IMR-90 (cell line): ENCODE measurements at regions of chr17 and their contacts with region 1.

Region 1: DNA sequence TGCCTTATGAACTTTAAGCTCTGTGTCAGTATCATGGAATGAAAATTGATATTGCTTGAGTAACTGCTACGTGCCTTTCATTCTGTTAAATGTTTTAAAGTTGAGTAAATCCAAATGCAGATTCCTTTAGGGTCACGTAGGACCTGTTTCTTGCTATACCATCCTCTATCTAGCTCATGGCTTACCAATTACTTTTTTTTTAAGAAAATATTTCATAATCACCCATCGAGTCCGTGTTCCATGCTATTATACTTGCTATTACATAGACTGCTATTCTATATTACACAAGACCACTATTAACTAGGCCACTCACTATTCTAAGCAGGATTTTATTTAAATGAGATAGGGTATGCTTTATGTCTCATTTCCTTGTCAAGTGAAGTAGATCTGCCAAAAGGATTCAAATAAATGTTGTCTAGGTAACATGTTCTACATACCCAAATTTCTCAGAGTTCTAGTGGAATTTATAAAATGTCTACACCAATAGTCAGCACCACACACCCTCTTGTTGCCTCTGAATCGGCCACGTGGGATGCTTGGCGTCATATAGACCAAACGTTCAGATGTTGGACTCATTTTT is 11.9 kb downstream of the ANKFN1 start:
- DNase-seq: peak; percentile 81
- ATAC-seq: peak; percentile 72
- H3K4me3 ChIP-seq: no peak overlapping the region
- H3K27ac ChIP-seq: peak overlapping the region; percentile 97
- H3K4me1 ChIP-seq: peaks cover 10% of the 10 kb centered on the region
- H3K27me3 ChIP-seq: no peaks in the 10 kb centered on the region
- CTCF ChIP-seq: no peak
- POLR2A ChIP-seq: no peak
- RAD21 ChIP-seq: no peak

Region 2: DNA sequence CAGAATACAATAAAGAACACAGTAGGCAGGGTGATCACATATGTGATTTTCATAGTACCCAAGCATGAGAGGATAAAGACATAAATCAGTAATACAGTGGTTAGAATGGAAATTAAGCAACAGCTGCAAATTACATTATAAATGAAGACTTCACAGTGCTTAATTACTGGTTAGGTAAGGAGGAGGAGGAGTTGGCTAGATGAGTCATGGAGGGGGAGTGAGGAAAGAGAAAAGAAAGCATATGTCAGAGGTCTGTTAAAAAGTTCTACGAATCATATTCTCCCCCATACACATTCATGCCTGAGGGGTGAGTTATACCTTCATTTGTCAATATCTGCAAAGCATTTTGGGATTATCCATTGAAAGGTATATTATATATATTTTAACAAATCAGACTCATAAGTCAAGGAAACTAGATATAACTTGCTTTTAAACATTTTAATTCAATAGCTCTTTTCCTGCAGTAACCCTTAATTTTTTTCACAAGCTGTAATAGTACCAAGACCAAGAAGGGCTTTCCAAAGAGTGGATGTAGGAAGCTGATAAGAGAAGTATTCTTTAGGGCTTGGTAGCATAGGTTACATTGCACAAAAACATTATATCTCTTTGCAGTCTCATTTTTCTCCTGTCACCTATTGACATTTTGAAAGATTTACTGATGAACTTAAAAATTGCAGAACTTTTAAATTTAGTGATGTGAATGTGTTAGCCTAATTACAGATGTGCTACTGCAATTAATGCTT is 1097.3 kb before region 1 on chr17:
- CTCF ChIA-PET with region 1: no interaction called
- POLR2A ChIA-PET with region 1: no interaction called
- dilution Hi-C with region 1: no loop called
- in situ Hi-C with region 1: no loop called
- intact Hi-C with region 1: no loop called
- DNase-seq: peak; percentile 50
- ATAC-seq: no peak
- H3K4me3 ChIP-seq: no peak overlapping the region
- H3K27ac ChIP-seq: no peak overlapping the region
- H3K4me1 ChIP-seq: no peaks in the 10 kb centered on the region
- H3K27me3 ChIP-seq: no peaks in the 10 kb centered on the region
- CTCF ChIP-seq: no peak
- POLR2A ChIP-seq: no peak
- RAD21 ChIP-seq: no peak

Region 3: GRCh38 chr17:56185905-56186783 is 21.0 kb after region 1 on chr17:
- CTCF ChIA-PET with region 1: no interaction called
- POLR2A ChIA-PET with region 1: interaction called, 5 read pairs
- dilution Hi-C with region 1: no loop called
- in situ Hi-C with region 1: no loop called
- intact Hi-C with region 1: loop called (anchors 2 kb)
- DNase-seq: peak; percentile 94
- ATAC-seq: peak; percentile 92
- H3K4me3 ChIP-seq: no peak overlapping the region
- H3K27ac ChIP-seq: peak overlapping the region; percentile 80
- H3K4me1 ChIP-seq: peaks cover 4% of the 10 kb centered on the region; the same call in 1 of the 2 replicates
- H3K27me3 ChIP-seq: no peaks in the 10 kb centered on the region
- CTCF ChIP-seq: no peak
- POLR2A ChIP-seq: peak; percentile 27; the same call in 1 of the 2 replicates
- RAD21 ChIP-seq: no peak